Naive thymus-derived CD8-positive, alpha-beta T cell (primary cell): ENCODE measurements at regions of chr19 and their contacts with region 1.

Region 1: DNA sequence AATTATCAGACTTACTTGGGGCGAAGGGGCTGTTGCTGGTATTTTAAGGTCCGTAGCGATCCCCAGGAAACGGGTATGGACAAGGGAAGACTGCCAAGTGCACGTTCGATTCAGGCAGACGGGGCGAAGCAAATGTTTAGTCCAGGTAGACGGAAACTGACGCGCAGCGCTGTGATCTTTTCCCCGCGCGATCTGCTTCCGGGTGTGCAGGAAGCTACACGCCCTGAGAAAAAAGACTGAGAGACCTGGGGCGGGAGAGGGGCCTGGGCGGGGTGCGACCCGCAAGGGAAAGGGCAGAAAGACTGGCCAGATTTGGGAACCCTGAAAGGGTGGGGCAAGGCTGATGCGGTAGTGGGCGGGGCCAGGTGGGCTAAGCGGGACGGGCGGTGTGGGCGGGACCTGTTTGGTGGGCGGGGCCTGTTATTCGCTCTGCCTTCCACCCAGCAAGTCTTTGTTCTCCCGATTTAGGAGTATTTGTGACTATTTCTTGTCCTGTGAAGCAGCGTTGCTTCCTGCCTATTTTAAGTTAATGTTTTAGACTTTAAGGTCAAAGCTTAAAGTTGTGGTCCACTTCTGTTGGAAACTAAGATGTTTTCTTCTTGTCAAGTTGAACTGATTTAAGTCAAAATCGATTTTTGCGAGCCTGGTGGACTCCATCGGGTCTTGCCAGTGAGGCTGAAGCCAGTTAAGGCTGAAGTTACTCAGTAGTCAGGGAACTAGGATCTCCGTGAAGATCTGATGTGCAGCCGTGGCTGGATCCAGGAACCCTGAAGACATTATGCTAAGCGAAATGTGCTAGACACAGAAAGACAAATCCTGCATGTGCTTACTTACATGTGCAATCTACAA is at the start of gene ZNF836:
- DNase-seq: peak; percentile 82 to 97 (median 93)
- ATAC-seq: peak; percentile 94
- H3K4me3 Mint-ChIP-seq: peak within 1 kb of the TSS; percentile 87 to 99 (median 96)
- H3K27ac Mint-ChIP-seq: peak within 1 kb of the TSS; percentile 93 to 100 (median 98)
- H3K4me1 Mint-ChIP-seq: peaks cover 13 to 54% (median 36%) of the 10 kb centered on the region in 4 donors
- H3K27me3 Mint-ChIP-seq: no peaks in the 10 kb centered on the region
- polyA plus RNA-seq, gene ZNF836: 10.2 to 19.8 (median 12.8) TPM

Region 2: GRCh38 chr19:52034051-52034728 is 137.4 kb before region 1 on chr19:
- POLR2A ChIA-PET with region 1: no interaction called
- DNase-seq: no peak
- ATAC-seq: no peak
- H3K4me3 Mint-ChIP-seq: no peak overlapping the region
- H3K27ac Mint-ChIP-seq: no peak overlapping the region
- H3K4me1 Mint-ChIP-seq: no peaks in the 10 kb centered on the region
- H3K27me3 Mint-ChIP-seq: no peaks in the 10 kb centered on the region

Region 3: DNA sequence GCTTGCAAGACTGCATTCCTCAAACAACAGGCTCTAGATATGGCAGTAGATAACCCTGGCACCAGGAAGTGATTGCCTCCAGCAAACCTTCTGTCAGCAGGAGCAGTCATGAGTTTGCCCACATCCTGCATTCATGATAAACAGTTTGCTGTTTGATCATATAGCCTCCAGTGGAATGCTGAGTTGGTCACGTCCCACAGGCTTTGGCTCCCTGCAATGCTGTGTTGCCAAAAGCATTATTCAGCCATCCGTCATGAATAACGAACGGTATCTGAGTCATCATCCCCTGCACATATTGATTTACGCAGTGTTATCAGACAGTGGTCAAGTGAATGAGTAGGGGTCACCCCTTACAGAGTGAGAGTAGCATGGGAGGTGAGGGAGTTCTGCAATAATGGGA is 101.1 kb before region 1 on chr19:
- POLR2A ChIA-PET with region 1: no interaction called
- DNase-seq: no peak
- ATAC-seq: no peak
- H3K4me3 Mint-ChIP-seq: peak overlapping the region in 2 of 10 donors; percentile 2 to 3
- H3K27ac Mint-ChIP-seq: no peak overlapping the region
- H3K4me1 Mint-ChIP-seq: peaks cover 0 to 7% (median 0%) of the 10 kb centered on the region in 4 donors
- H3K27me3 Mint-ChIP-seq: no peaks in the 10 kb centered on the region

Region 4: DNA sequence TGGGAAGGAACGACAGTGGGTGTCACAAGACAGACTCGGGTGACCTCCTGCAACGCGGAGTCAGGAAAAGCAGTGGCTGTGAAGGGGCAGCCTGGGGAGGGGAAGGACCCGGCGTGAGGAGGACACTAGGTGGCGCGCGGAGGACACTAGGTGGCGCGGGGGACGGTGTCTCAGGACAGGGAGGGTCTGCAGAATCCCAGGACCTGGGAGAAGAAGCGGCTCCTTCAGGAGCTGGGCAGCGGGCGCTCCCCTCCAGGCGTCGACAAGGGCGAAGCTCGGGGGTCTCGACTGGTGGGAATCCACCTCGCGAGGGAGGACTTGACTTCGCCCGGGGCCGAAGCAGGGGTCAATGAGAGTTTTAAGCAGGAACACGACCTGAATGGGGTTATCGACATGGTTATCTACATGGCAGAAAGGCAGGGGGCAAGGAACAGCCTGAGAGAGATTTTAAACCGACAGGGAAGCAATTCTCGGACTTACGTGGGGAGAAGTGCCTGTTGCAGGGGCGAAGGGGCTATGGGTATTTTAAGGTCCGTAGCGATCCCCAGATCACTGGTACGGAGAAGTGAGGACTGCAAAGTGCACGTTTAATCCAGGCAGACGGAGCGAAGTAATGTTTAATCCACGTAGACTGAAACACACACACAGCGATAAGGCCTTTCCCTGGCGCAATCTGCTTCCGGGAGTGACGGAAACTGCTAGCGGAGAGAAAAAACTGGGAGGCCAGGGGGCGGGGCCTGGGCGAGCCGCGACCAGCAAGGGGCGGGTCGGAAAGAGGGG is 32.1 kb before region 1 on chr19 and contains the start of gene ZNF616:
- POLR2A ChIA-PET with region 1: interaction called, 22 read pairs
- DNase-seq: peak; percentile 69 to 98 (median 96)
- ATAC-seq: peak; percentile 67 to 80
- H3K4me3 Mint-ChIP-seq: peak within 1 kb of the TSS; percentile 88 to 99 (median 96)
- H3K27ac Mint-ChIP-seq: peak within 1 kb of the TSS; percentile 90 to 99 (median 96)
- H3K4me1 Mint-ChIP-seq: peaks cover 24 to 42% (median 38%) of the 10 kb centered on the region in 4 donors
- H3K27me3 Mint-ChIP-seq: no peaks in the 10 kb centered on the region
- polyA plus RNA-seq, gene ZNF616: 2.3 to 6.7 (median 4.9) TPM